ENCODE measurements at regions of chr2 and their contacts with region 1.

Region 1: GRCh38 chr2:237674731-237675276 is 47.4 kb downstream of the LRRFIP1 start:
- DNase-seq: peak; percentile 86
- H3K4me3 ChIP-seq: peak overlapping the region; percentile 65
- H3K27ac ChIP-seq: peak overlapping the region; percentile 97
- H3K4me1 ChIP-seq: peaks cover 86% of the 10 kb centered on the region
- CTCF ChIP-seq: no peak

Region 2: DNA sequence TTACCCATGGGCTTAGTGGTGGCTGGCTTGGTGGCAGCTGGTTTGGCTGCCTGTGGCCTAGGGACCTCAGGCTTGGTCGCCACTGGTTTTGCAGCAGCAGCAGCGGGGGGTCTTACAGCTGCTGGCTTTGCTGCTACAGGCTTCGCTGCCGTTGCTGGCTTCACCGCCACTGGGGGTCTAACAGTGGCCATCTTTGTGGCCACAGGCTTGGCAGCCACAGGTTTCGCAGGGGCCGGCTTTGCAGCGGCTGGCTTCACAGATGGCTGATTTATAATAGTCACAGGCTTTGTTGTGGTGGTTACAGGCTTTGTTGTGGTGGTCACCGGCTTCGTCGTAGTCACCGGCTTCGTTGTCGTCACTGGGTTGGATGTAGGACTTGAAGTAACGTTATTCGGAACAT is 338.7 kb before region 1 on chr2:
- CTCF ChIA-PET with region 1: no interaction called
- POLR2A ChIA-PET with region 1: no interaction called
- intact Hi-C with region 1: no loop called
- DNase-seq: no peak
- H3K4me3 ChIP-seq: no peak overlapping the region
- H3K27ac ChIP-seq: no peak overlapping the region
- H3K4me1 ChIP-seq: no peaks in the 10 kb centered on the region
- CTCF ChIP-seq: no peak

Region 3: DNA sequence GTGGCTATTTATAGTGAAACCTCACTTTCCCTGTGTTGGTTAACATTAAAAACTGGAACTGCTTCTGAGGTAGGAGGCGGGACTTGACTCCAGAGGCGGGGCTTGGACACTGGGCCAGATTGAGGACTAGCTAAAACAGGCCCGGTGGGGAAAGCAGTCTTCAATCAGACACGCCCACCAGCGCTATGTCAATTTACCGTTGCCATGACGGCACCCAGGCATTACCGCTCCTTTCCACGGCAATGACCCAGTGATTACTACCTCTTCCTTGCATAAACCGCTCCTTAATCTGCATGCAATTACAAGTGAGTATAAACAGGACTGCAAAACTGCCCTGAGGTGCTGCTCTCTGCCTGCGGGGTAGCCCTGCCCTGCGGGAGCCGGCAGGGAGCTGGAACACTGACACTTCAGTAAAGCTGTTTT is 12.1 kb before region 1 on chr2:
- CTCF ChIA-PET with region 1: interaction called, 4 read pairs
- POLR2A ChIA-PET with region 1: interaction called, 10 read pairs
- intact Hi-C with region 1: no loop called
- DNase-seq: peak; percentile 86
- H3K4me3 ChIP-seq: peak overlapping the region; percentile 56
- H3K27ac ChIP-seq: peak overlapping the region; percentile 70
- H3K4me1 ChIP-seq: peaks cover 72% of the 10 kb centered on the region
- CTCF ChIP-seq: no peak

Region 4: GRCh38 chr2:237691908-237692600 is 17.2 kb after region 1 on chr2:
- CTCF ChIA-PET with region 1: interaction called, 24 read pairs
- POLR2A ChIA-PET with region 1: interaction called, 290 read pairs
- intact Hi-C with region 1: loop called (anchors 1 kb)
- DNase-seq: peak; percentile 92
- H3K4me3 ChIP-seq: peak overlapping the region; percentile 91
- H3K27ac ChIP-seq: peak overlapping the region; percentile 99
- H3K4me1 ChIP-seq: peaks cover 49% of the 10 kb centered on the region
- CTCF ChIP-seq: no peak

Region 5: GRCh38 chr2:237700512-237701032 is 25.8 kb after region 1 on chr2:
- CTCF ChIA-PET with region 1: interaction called, 24 read pairs
- POLR2A ChIA-PET with region 1: interaction called, 290 read pairs
- intact Hi-C with region 1: no loop called
- DNase-seq: peak; percentile 29
- H3K4me3 ChIP-seq: peak overlapping the region; percentile 34
- H3K27ac ChIP-seq: peak overlapping the region; percentile 43
- H3K4me1 ChIP-seq: peaks cover 83% of the 10 kb centered on the region
- CTCF ChIP-seq: no peak

Region 6: GRCh38 chr2:237774802-237775553 is 100.2 kb after region 1 on chr2:
- CTCF ChIA-PET with region 1: no interaction called
- POLR2A ChIA-PET with region 1: interaction called, 3 read pairs
- intact Hi-C with region 1: loop called (anchors 1 kb)
- DNase-seq: peak; percentile 68
- H3K4me3 ChIP-seq: no peak overlapping the region
- H3K27ac ChIP-seq: no peak overlapping the region
- H3K4me1 ChIP-seq: no peaks in the 10 kb centered on the region
- CTCF ChIP-seq: peak; percentile 84

Measured in OCI-LY7 (cell line).